ENCODE measurements at regions of chr3 and their contacts with region 1.

Region 1: GRCh38 chr3:42831321-42831713 is 22.1 kb downstream of the ACKR2 start:
- DNase-seq: peak; percentile 57
- H3K4me3 ChIP-seq: peak overlapping the region in 1 of 2 experiments; percentile 28; a peak in 1 of 4 replicates
- H3K27ac ChIP-seq: no peak overlapping the region
- H3K4me1 ChIP-seq: peaks cover 0 to 3% of the 10 kb centered on the region in 2 experiments; a peak in 2 of 4 replicates
- H3K27me3 ChIP-seq: no peaks in the 10 kb centered on the region; the same call in 1 of the 2 replicates
- CTCF ChIP-seq: peak; percentile 80
- EP300 ChIP-seq: no peak
- RAD21 ChIP-seq: peak; percentile 75

Region 2: DNA sequence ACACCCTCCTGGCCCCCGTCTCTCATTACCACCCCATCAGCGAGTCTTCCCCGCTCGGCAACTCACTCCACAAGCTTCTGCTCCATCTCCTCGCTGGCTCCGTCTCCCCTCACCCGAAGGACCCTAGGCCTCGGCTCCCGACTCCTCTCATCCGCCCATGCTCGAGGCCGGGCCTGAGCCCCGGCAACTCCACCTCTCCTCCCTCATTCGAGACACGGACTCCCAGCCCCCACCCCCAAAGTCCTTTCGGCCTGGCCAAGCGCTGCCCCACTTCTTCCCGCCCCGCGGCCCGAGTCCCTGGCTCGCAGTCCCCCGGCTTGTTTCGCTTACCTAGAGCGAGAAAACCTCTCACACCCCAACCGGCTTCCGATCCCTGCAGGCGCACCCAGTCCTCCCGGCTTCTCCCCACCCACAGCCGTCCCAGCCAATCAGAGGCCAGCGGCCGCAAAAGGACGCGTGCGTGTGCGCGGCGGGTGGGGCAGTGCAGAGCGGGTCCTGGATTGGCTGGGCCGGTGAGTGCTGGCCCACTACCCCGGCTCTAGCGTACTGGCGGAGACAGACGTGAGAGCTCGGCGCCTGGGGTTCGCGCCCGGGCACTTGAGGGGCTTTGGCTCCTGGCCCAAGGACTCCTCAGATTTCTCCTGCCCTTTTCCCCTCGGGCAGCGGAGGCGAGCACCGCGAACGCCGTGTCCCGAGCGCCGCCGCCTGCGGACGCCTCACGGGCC is 27.0 kb before region 1 on chr3 and contains the start of gene HIGD1A:
- CTCF ChIA-PET with region 1: interaction called, 15 read pairs
- POLR2A ChIA-PET with region 1: no interaction called
- DNase-seq: peak; percentile 99
- H3K4me3 ChIP-seq: peak within 1 kb of the TSS; percentile 85 to 89
- H3K27ac ChIP-seq: peak within 1 kb of the TSS; percentile 87 to 91
- H3K4me1 ChIP-seq: peaks cover 0 to 13% of the 10 kb centered on the region in 2 experiments; a peak in 3 of 4 replicates
- H3K27me3 ChIP-seq: no peaks in the 10 kb centered on the region
- CTCF ChIP-seq: no peak
- EP300 ChIP-seq: 0 out of 4 replicates have a peak, but pooled peaks of 1 of the 2 experiments have one; percentile 5
- RAD21 ChIP-seq: no peak
- polyA plus RNA-seq, gene HIGD1A: 72.1 and 112 TPM in 2 replicates

Region 3: GRCh38 chr3:42846685-42847522 is 15.6 kb after region 1 on chr3:
- CTCF ChIA-PET with region 1: interaction called, 12 read pairs
- POLR2A ChIA-PET with region 1: no interaction called
- DNase-seq: no peak
- H3K4me3 ChIP-seq: no peak overlapping the region
- H3K27ac ChIP-seq: peak overlapping the region in 1 of 2 experiments; percentile 19; a peak in 1 of 4 replicates
- H3K4me1 ChIP-seq: peaks cover 0 to 21% of the 10 kb centered on the region in 2 experiments; a peak in 1 of 4 replicates
- H3K27me3 ChIP-seq: no peaks in the 10 kb centered on the region; the same call in 1 of the 2 replicates
- CTCF ChIP-seq: no peak
- EP300 ChIP-seq: no peak
- RAD21 ChIP-seq: no peak

Region 4: DNA sequence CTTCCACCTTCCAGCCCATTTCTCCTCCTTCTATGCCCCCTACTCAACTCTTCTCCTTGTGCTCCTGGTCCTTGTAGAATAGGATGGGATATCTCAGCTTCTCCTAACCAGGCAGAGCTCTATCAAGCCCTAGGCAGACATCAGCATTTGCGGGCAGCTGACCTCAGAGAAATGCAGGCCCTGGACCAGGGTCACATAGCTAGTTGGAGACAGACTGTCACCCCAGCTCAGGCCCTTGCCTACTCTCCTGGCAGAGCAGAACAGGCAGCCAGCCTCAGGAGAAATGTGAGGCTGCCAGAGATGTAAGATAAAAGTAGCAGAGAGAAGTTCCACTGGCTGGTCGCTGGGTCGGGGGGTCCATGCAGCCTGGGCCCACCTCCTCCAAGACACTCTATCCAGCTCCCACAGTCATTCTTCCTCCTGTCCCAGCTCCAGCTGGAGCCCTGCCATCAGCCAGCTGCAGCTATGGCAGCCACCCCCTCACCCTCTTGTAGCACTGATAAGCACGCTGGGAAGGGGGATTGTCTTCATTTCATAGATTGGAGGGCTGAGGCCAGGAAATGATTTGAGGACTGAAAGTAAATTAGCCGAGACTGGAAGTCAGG is 40.4 kb after region 1 on chr3:
- CTCF ChIA-PET with region 1: interaction called, 42 read pairs
- POLR2A ChIA-PET with region 1: no interaction called
- DNase-seq: peak; percentile 78
- H3K4me3 ChIP-seq: no peak overlapping the region
- H3K27ac ChIP-seq: peak overlapping the region in 1 of 2 experiments; percentile 92; a peak in 2 of 4 replicates
- H3K4me1 ChIP-seq: peaks cover 0 to 22% of the 10 kb centered on the region in 2 experiments; a peak in 1 of 4 replicates
- H3K27me3 ChIP-seq: peaks cover 19% of the 10 kb centered on the region; the same call in 1 of the 2 replicates
- CTCF ChIP-seq: no peak
- EP300 ChIP-seq: peak in 1 of 2 experiments; percentile 37; a peak in 2 of 4 replicates
- RAD21 ChIP-seq: no peak

Region 5: DNA sequence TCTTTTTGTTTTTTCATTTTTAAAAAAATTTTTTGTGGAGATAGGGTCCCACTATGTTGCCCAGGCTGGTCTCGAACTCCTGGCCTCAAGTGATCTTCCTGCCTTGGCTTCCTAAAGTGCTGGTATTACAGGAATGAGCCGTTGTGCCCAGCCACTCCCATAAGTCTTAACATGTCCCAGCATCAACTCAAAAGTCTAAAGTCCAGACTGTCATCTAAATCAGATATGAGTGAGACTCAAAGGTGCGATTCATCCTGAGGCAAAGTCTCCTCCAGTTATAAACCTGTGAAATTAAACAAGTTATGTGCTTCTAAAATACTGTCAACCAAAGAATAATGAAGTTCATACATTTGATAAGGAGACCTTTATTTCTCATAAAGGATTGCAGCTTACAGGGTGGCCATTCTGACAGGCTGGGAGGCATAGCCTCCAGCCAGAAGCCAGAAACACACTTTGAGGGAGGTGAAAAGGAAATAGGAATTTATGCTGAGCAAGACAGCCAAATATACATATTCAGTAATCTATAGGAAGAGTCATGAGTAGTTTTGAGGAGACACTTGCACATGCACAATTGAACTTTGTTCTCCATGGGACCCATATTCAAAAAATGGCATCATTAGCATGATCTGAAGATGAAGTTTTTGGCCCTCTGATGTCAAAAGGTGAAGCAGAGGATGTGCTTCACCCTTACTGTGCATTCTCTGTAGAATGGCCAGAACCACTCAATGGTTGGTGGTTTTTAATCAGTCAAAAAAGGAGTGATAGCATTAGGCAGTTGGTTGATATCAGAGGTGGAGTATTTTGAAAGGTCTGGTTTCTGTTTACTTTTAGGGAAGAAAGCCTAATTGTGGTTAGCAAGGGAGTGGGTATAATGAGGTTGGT is 63.6 kb after region 1 on chr3:
- CTCF ChIA-PET with region 1: interaction called, 11 read pairs
- POLR2A ChIA-PET with region 1: no interaction called
- DNase-seq: no peak
- H3K4me3 ChIP-seq: no peak overlapping the region
- H3K27ac ChIP-seq: no peak overlapping the region
- H3K4me1 ChIP-seq: no peaks in the 10 kb centered on the region
- H3K27me3 ChIP-seq: no peaks in the 10 kb centered on the region
- CTCF ChIP-seq: no peak
- EP300 ChIP-seq: no peak
- RAD21 ChIP-seq: no peak